PC-3 (cell line): ENCODE measurements at regions of chr17 and their contacts with region 1.

Region 1: GRCh38 chr17:61837175-61838051 is 25.9 kb downstream of the BRIP1 start:
- DNase-seq: peak; percentile 85
- ATAC-seq: peak; percentile 63
- H3K4me3 ChIP-seq: no peak overlapping the region
- H3K27ac ChIP-seq: no peak overlapping the region
- H3K4me1 ChIP-seq: peaks cover 30% of the 10 kb centered on the region
- H3K27me3 ChIP-seq: no peaks in the 10 kb centered on the region
- CTCF ChIP-seq: peak; percentile 82

Region 2: DNA sequence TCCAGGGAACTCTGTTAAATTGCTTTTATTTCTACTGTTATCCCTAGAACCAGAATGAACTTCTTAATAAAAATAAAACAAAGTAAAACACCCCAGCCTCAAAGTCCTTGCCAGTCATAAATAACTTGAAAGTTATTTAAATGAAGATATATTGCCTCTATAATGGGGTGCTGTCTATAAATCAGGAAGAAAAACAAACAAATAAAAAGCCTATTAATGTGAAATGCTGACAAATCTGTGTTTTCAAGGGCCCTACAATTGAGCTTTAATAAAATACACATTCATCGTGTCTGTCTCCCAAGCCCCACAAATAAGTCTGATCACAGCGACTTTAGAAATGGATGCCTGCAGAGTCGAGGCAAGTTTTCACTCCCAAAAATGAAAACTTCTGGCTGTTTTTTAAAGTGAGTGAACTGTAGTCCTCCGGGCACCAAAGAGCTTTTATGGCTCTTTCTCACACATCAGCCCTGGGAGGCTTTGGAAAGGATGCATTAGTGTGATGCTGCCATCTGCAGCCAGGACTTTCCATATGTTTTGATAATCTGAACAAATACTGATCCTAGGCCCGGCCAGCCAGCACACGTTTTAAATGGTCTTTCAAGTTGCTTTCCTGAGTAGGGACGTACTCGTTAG is 262.8 kb before region 1 on chr17:
- CTCF ChIA-PET with region 1: interaction called, 3 read pairs
- POLR2A ChIA-PET with region 1: no interaction called
- intact Hi-C with region 1: loop called (anchors 2 kb)
- DNase-seq: peak; percentile 89
- ATAC-seq: peak; percentile 97
- H3K4me3 ChIP-seq: peak overlapping the region; percentile 23; the same call in 1 of the 2 replicates
- H3K27ac ChIP-seq: peak overlapping the region; percentile 59
- H3K4me1 ChIP-seq: peaks cover 26% of the 10 kb centered on the region
- H3K27me3 ChIP-seq: no peaks in the 10 kb centered on the region
- CTCF ChIP-seq: peak; percentile 80

Region 3: GRCh38 chr17:61635913-61636432 is 201.4 kb before region 1 on chr17:
- CTCF ChIA-PET with region 1: interaction called, 6 read pairs
- POLR2A ChIA-PET with region 1: no interaction called
- intact Hi-C with region 1: loop called (anchors 1 kb)
- DNase-seq: peak; percentile 86
- ATAC-seq: peak; percentile 73
- H3K4me3 ChIP-seq: no peak overlapping the region
- H3K27ac ChIP-seq: no peak overlapping the region
- H3K4me1 ChIP-seq: no peaks in the 10 kb centered on the region
- H3K27me3 ChIP-seq: no peaks in the 10 kb centered on the region
- CTCF ChIP-seq: peak; percentile 97

Region 4: DNA sequence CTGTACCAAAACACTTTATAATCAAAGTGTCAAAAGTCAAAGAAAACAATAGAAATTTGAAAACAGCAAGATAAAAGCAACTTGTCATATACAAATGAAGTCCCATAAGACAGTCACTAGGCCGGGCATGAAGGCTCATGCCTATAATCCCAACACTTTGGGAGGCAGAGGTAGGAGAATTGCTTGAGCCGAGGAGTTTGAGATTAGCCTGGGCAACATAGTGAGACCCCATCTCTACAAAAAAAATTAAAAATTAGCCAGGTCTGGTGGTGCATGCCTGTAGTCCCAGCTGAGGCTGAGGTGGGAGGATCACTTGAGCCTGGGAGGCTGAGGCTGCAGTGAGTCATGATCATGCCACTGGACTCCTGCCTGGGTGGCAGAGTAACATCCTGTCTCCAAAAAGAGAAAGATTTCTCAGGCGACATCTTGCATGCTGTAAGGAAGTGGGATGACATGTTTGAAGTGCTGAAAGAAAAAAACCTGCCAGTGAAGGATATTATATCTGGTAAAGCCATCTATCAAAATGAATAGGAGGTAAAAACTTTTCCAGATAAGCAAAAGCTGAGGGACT is 147.7 kb before region 1 on chr17:
- CTCF ChIA-PET with region 1: no interaction called
- POLR2A ChIA-PET with region 1: no interaction called
- intact Hi-C with region 1: loop called (anchors 1 kb)
- DNase-seq: peak; percentile 43
- ATAC-seq: peak; percentile 76
- H3K4me3 ChIP-seq: no peak overlapping the region
- H3K27ac ChIP-seq: no peak overlapping the region
- H3K4me1 ChIP-seq: no peaks in the 10 kb centered on the region
- H3K27me3 ChIP-seq: no peaks in the 10 kb centered on the region
- CTCF ChIP-seq: no peak

Region 5: DNA sequence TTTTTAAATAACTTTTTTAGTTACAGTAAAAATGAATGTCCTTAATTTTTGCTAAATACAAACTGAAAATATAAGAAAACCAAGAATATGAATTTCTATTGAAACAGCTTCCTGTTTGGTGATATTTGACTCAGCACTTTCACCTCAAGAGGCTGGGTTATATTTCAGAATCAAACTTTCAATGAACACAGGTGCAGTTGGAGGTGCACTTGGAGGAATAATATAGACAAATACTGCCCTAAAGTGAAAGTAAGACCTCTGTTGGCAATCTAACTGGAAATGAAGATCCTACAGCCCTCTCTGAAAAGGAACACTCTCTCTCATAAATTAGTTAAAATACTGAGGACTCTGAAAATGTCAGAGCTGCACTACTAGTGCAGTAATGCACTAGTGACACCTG is 80.2 kb before region 1 on chr17:
- CTCF ChIA-PET with region 1: no interaction called
- POLR2A ChIA-PET with region 1: no interaction called
- intact Hi-C with region 1: no loop called
- DNase-seq: no peak
- ATAC-seq: no peak
- H3K4me3 ChIP-seq: no peak overlapping the region
- H3K27ac ChIP-seq: no peak overlapping the region
- H3K4me1 ChIP-seq: peaks cover 9% of the 10 kb centered on the region
- H3K27me3 ChIP-seq: no peaks in the 10 kb centered on the region
- CTCF ChIP-seq: no peak

Region 6: DNA sequence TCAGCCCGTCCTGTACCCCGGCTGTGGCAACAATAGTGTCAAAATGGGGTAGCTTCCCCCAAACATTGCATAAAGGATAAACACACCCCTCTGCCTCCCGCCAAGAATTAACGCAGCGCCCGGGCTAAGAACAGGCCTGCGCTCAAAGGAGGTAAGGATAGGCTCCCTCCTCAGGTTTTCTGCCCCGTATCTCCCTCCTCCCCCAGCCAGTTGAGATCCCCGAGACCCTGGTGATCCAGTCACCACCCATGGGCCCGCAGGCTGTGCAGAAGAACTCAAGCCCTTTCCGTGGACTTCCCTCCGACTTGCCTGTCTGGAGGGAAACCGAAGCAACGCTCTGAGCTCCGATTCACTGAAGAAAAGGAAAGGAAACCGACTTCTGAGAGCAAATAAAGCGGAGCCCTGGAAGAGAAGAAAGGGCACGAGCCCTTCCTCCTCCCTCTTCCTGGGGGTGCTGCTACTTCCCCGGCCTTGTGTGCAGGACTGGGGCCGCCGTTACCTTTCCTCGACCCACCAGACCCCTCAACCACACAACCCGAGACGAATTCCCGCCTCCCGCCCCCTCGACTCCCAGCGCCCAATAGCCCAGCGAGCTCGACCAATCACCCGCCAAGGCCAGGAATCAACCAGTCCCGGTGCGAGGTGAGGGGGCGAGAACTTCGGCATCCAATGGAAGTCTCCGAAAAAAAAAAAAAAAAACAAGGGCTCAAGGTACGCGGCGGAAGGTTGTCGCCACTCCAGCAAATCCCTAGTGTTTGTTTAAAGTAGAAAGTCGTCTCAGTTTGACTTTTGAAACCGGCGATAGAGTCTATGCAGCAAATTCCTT is 25.8 kb after region 1 on chr17 and contains the start of gene BRIP1:
- CTCF ChIA-PET with region 1: interaction called, 12 read pairs
- POLR2A ChIA-PET with region 1: interaction called, 11 read pairs
- intact Hi-C with region 1: no loop called
- DNase-seq: peak; percentile 98
- ATAC-seq: peak; percentile 91
- H3K4me3 ChIP-seq: peak within 1 kb of the TSS; percentile 79
- H3K27ac ChIP-seq: peak within 1 kb of the TSS; percentile 51
- H3K4me1 ChIP-seq: peaks cover 34% of the 10 kb centered on the region
- H3K27me3 ChIP-seq: no peaks in the 10 kb centered on the region
- CTCF ChIP-seq: no peak
- total RNA-seq, gene BRIP1: 13.8 and 21.1 TPM in 2 replicates